Naive thymus-derived CD4-positive, alpha-beta T cell (primary cell): ENCODE measurements at regions of chr14 and their contacts with region 1.

Region 1: GRCh38 chr14:55411426-55412389 is at the start of gene ATG14:
- DNase-seq: peak; percentile 48 to 78 (median 66)
- ATAC-seq: peak; percentile 98
- H3K4me3 ChIP-seq: peak within 1 kb of the TSS; percentile 68
- H3K4me3 Mint-ChIP-seq: peak within 1 kb of the TSS; percentile 68 to 94 (median 92)
- H3K27ac ChIP-seq: peak within 1 kb of the TSS; percentile 86
- H3K27ac Mint-ChIP-seq: peak within 1 kb of the TSS; percentile 86 to 95 (median 90)
- H3K4me1 ChIP-seq: peaks cover 11 to 16% of the 10 kb centered on the region in 2 donors
- H3K4me1 Mint-ChIP-seq: peaks cover 26 to 56% (median 39%) of the 10 kb centered on the region in 7 donors
- H3K27me3 ChIP-seq: no peaks in the 10 kb centered on the region
- H3K27me3 Mint-ChIP-seq: peaks cover 0 to 5% (median 0%) of the 10 kb centered on the region in 5 donors
- total RNA-seq, gene ATG14: 7.8 to 19.6 (median 18.8) TPM

Region 2: GRCh38 chr14:55191203-55192053 is 220.3 kb before region 1 on chr14 and contains the start of gene DLGAP5:
- CTCF ChIA-PET with region 1: no interaction called
- POLR2A ChIA-PET with region 1: no interaction called
- intact Hi-C with region 1: loop called (anchors 2 to 5 kb)
- DNase-seq: peak; percentile 59 to 90 (median 86)
- ATAC-seq: peak; percentile 98
- H3K4me3 ChIP-seq: peak within 1 kb of the TSS; percentile 84
- H3K4me3 Mint-ChIP-seq: peak within 1 kb of the TSS; percentile 88 to 97 (median 90)
- H3K27ac ChIP-seq: peak within 1 kb of the TSS; percentile 58
- H3K27ac Mint-ChIP-seq: peak within 1 kb of the TSS; percentile 46 to 92 (median 68)
- H3K4me1 ChIP-seq: peaks cover 7 to 10% of the 10 kb centered on the region in 2 donors
- H3K4me1 Mint-ChIP-seq: peaks cover 5 to 42% (median 18%) of the 10 kb centered on the region in 7 donors
- H3K27me3 ChIP-seq: no peaks in the 10 kb centered on the region
- H3K27me3 Mint-ChIP-seq: peaks cover 0 to 4% (median 0%) of the 10 kb centered on the region in 5 donors
- total RNA-seq, gene DLGAP5: 0.49 to 46.7 TPM in 2 of 5 experiments, not detected in the others

Region 3: GRCh38 chr14:55361190-55361589 is 50.5 kb before region 1 on chr14:
- CTCF ChIA-PET with region 1: no interaction called
- POLR2A ChIA-PET with region 1: no interaction called
- intact Hi-C with region 1: no loop called
- DNase-seq: no peak
- ATAC-seq: no peak
- H3K4me3 ChIP-seq: no peak overlapping the region
- H3K4me3 Mint-ChIP-seq: no peak overlapping the region
- H3K27ac ChIP-seq: no peak overlapping the region
- H3K27ac Mint-ChIP-seq: peak overlapping the region in 6 of 9 donors; percentile 17 to 67 (median 44)
- H3K4me1 ChIP-seq: no peaks in the 10 kb centered on the region
- H3K4me1 Mint-ChIP-seq: peaks cover 0 to 15% (median 12%) of the 10 kb centered on the region in 7 donors
- H3K27me3 ChIP-seq: no peaks in the 10 kb centered on the region
- H3K27me3 Mint-ChIP-seq: no peaks in the 10 kb centered on the region

Region 4: DNA sequence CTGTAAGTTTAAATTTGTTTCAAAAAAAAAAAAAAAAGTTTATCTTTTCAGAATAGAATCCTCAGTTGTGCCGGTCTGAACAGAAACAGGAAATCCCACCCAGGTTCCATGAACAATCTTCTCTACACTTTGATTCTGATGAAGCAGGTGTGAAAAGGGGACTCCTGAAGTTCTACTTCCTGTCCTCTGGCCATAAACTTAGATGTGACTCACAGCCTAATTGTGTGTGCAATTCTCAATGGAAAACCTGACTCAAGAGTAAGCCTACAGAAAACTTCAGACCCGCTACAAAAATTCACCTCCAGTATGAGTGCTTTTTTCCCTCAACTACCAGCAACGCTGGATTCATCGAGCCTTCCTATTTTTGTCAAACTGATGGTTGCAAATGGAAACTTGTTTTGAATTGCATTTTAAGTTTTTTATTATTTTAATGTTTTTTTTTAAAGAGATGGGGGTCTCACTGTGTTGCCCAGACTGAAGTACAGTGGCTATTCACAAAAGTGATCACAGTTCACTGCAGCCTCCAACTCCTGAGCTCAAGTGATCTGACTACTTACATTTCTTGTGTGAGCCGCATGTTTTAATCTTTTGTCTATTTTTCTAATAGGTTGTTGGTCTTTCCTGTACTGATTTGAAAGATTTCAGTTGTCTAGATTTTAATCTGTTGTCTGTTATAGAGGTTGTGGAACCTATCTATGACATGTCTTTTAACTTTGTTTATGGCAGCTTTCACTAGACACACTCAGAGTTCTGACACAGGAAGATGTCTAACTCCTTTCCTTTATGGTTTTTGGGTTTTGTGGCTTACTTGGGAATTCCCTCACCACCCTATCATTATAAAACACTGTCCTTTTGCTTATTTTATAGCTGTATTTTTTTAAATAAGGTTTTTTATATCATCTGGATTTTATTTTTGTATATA is 37.7 kb before region 1 on chr14:
- CTCF ChIA-PET with region 1: no interaction called
- POLR2A ChIA-PET with region 1: no interaction called
- intact Hi-C with region 1: loop called in 1 of 2 experiments (anchors 1 kb)
- DNase-seq: peak in 8 of 9 donors; percentile 18 to 76 (median 58)
- ATAC-seq: peak; percentile 93
- H3K4me3 ChIP-seq: no peak overlapping the region
- H3K4me3 Mint-ChIP-seq: peak overlapping the region in 9 of 10 donors; percentile 22 to 82 (median 54)
- H3K27ac ChIP-seq: peak overlapping the region; percentile 64
- H3K27ac Mint-ChIP-seq: peak overlapping the region; percentile 75 to 94 (median 83)
- H3K4me1 ChIP-seq: peaks cover 12 to 20% of the 10 kb centered on the region in 2 donors
- H3K4me1 Mint-ChIP-seq: peaks cover 13 to 44% (median 30%) of the 10 kb centered on the region in 7 donors
- H3K27me3 ChIP-seq: no peaks in the 10 kb centered on the region
- H3K27me3 Mint-ChIP-seq: no peaks in the 10 kb centered on the region

Region 5: GRCh38 chr14:55386031-55386808 is 25.5 kb before region 1 on chr14:
- CTCF ChIA-PET with region 1: no interaction called
- POLR2A ChIA-PET with region 1: no interaction called
- intact Hi-C with region 1: loop called in 1 of 2 experiments (anchors 1 kb)
- DNase-seq: no peak
- ATAC-seq: peak; percentile 29
- H3K4me3 ChIP-seq: no peak overlapping the region
- H3K4me3 Mint-ChIP-seq: peak overlapping the region in 2 of 10 donors; percentile 52 to 73
- H3K27ac ChIP-seq: no peak overlapping the region
- H3K27ac Mint-ChIP-seq: peak overlapping the region; percentile 22 to 94 (median 52)
- H3K4me1 ChIP-seq: peaks cover 0 to 5% of the 10 kb centered on the region in 2 donors
- H3K4me1 Mint-ChIP-seq: peaks cover 0 to 32% (median 8%) of the 10 kb centered on the region in 7 donors
- H3K27me3 ChIP-seq: no peaks in the 10 kb centered on the region
- H3K27me3 Mint-ChIP-seq: no peaks in the 10 kb centered on the region